GM18951 (cell line): ENCODE measurements at regions of chr1 and their contacts with region 1.

Region 1: DNA sequence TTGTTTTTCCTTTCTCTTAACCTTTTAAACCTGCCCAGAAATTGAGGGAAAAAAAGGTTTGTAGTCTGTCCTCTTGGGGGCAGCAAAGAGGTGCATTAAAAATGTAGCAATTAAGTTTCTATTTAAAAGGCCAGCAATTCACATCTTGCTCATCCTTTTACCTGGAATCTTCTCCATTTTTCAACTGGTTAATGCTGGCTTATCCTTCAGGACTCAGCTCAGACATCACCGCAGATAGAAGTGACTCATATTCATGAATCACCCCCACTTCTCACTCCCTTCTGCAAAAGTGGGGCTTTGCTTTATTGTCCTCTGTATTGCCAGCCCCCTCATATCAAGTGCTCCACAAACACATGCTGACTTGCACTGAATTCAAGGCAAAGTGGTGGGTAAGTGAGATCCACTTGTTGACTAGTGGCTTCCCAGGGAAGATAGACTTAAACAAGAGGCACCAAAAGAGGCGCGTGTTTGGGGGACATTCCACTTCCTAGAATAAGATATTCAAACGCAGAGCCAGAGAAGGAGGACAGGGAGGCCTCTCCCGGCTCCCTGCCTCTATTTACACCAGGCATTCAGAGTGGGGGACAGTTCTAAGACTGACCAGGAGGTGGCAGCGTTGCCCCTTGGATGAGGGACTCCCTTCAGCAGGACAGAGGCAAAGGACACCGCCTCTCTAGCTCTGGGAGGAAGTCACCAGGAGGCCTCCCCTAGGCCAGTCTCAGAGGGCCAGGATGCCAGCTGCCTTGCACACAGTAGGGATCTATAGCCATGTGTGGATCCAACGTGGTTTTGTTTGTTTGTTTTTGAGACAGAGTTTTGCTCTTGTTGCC is 23.2 kb upstream of the ZNF648 start:
- POLR2A ChIP-seq: no peak

Region 2: DNA sequence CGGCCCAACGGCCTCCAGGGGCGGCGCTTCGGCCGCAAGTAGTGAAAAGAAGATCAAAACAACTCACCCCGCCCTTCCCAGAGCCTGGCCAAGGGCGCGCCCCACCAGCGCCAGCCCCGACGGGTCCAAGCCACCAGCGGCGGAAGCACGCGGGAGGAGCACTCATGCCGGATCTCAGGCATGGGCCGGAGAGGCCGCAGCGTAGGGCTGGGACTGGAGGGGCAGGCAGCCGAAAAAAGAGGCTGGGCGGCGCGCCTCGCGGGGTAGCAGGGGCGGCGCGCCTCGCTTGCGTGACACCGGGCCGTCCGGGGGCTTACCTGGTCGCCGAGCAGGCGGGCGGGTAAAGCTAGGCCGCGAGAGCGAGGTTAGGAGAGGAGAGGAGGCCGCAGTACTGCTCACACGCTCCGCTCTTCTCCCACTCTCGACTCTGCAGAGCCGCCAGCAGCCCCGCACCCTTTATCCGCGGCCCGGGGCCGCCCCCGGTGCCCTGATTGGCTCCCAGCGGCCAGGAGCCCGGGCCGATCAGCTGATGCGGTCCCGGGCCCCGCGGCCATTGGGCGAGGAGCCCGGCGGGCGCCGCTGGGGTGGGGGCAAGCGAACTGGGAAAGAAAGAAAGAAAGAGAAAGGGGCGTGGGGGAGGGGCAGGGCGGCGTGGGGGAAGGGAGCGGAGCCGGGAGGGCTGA is 306.8 kb after region 1 on chr1 and contains the start of gene GLUL:
- in situ Hi-C with region 1: loop called (anchors 10 kb)
- POLR2A ChIP-seq: peak; percentile 88